ENCODE measurements at regions of chr10 and their contacts with region 1.

Region 1: GRCh38 chr10:34637418-34637911 is 177.6 kb downstream of the PARD3 start:
- DNase-seq: peak; percentile 74
- CTCF ChIP-seq: peak; percentile 98

Region 2: GRCh38 chr10:33327737-33328136 is 1309.7 kb before region 1 on chr10:
- in situ Hi-C with region 1: loop called (anchors 10 kb)
- DNase-seq: no peak
- CTCF ChIP-seq: no peak

Region 3: DNA sequence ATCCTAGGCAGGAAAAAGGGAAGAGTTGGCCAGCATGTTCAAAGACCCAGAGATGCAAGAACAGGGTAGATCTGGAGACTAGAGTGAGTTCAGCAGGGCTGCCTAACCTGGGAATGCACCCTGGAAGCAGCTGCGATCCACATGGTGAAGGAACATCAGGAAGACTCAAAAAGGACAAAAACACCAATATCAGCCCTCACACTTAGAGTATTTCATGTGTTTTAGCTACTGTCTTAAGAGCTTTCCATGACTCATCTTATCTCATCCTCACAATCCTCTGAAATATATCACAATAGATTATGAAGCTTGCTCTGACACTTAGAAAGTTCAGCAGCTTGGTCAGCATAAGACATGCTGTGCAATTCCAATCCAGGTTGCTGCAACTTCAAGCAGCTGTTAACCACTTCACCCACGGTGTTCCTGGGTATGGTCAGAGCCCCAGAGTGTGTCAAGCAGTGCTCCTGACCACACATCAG is 203.3 kb before region 1 on chr10:
- in situ Hi-C with region 1: no loop called
- DNase-seq: no peak
- CTCF ChIP-seq: no peak

Region 4: GRCh38 chr10:34489973-34490745 is 147.3 kb before region 1 on chr10:
- in situ Hi-C with region 1: no loop called
- DNase-seq: no peak
- CTCF ChIP-seq: no peak

Measured in GM13976 (cell line).